Caco-2 (cell line): ENCODE measurements at regions of chr2 and their contacts with region 1.

Region 1: DNA sequence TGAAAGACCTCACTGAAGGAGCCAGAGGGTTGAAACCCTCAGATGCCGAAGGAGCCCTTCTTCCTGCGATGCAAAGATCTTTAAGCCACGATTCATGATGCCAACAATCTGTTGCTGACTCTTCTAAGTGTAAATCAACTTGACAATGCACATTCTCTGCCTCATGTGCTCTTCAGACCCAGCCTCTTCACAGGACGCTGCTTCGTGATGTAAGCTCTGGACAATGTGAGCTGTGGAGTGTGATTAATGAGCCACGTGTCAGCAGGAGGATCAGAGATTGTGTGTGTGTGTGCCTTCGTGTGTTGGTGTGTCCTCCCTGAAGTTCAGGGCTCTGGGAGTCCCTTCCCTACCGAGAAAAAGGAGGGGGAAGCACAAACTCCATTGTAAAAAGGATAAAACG is 26.5 kb upstream of the TWIST2 start:
- DNase-seq: no peak
- H3K4me3 ChIP-seq: no peak overlapping the region
- H3K4me3 Mint-ChIP-seq: no peak overlapping the region
- H3K27ac Mint-ChIP-seq: no peak overlapping the region
- H3K4me1 ChIP-seq: peaks cover 6% of the 10 kb centered on the region; the same call in 1 of the 2 replicates
- H3K4me1 Mint-ChIP-seq: peaks cover 10% of the 10 kb centered on the region
- H3K27me3 ChIP-seq: no peaks in the 10 kb centered on the region
- H3K27me3 Mint-ChIP-seq: no peaks in the 10 kb centered on the region
- CTCF ChIP-seq: no peak

Region 2: DNA sequence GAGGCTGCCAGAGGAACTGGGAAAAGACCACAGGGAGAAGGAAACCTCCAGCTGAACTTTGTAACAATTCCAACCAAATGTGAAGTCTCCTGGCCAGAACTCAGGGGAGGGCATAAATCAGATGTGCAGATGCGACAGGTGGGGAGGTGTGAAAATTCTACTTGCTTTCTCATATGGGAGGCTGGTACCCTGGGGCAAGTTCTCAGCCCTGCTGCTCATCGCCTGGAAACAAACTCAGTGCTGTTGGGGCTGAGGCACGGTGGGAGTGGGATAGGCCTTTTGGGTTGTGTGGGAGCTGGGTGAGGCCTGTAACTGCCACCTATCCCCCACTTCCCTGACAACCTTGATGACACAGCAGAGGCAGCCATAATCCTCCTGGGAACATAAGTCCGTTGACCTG is 215.1 kb before region 1 on chr2:
- CTCF ChIA-PET with region 1: no interaction called
- POLR2A ChIA-PET with region 1: no interaction called
- intact Hi-C with region 1: no loop called
- DNase-seq: no peak
- H3K4me3 ChIP-seq: no peak overlapping the region
- H3K4me3 Mint-ChIP-seq: no peak overlapping the region
- H3K27ac Mint-ChIP-seq: no peak overlapping the region
- H3K4me1 ChIP-seq: no peaks in the 10 kb centered on the region
- H3K4me1 Mint-ChIP-seq: no peaks in the 10 kb centered on the region
- H3K27me3 ChIP-seq: no peaks in the 10 kb centered on the region
- H3K27me3 Mint-ChIP-seq: peaks cover 20% of the 10 kb centered on the region
- CTCF ChIP-seq: no peak

Region 3: GRCh38 chr2:238811293-238811692 is 10.1 kb before region 1 on chr2:
- CTCF ChIA-PET with region 1: no interaction called
- POLR2A ChIA-PET with region 1: no interaction called
- intact Hi-C with region 1: no loop called
- DNase-seq: no peak
- H3K4me3 ChIP-seq: no peak overlapping the region
- H3K4me3 Mint-ChIP-seq: no peak overlapping the region
- H3K27ac Mint-ChIP-seq: no peak overlapping the region
- H3K4me1 ChIP-seq: no peaks in the 10 kb centered on the region
- H3K4me1 Mint-ChIP-seq: no peaks in the 10 kb centered on the region
- H3K27me3 ChIP-seq: no peaks in the 10 kb centered on the region
- H3K27me3 Mint-ChIP-seq: no peaks in the 10 kb centered on the region
- CTCF ChIP-seq: no peak

Region 4: GRCh38 chr2:238864207-238865014 is 43.0 kb after region 1 on chr2:
- CTCF ChIA-PET with region 1: no interaction called
- POLR2A ChIA-PET with region 1: no interaction called
- intact Hi-C with region 1: loop called (anchors 1 kb)
- DNase-seq: peak; percentile 86 to 94
- H3K4me3 ChIP-seq: peak overlapping the region; percentile 25
- H3K4me3 Mint-ChIP-seq: peak overlapping the region; percentile 59
- H3K27ac Mint-ChIP-seq: peak overlapping the region; percentile 91
- H3K4me1 ChIP-seq: peaks cover 22% of the 10 kb centered on the region
- H3K4me1 Mint-ChIP-seq: peaks cover 10% of the 10 kb centered on the region
- H3K27me3 ChIP-seq: no peaks in the 10 kb centered on the region
- H3K27me3 Mint-ChIP-seq: no peaks in the 10 kb centered on the region
- CTCF ChIP-seq: no peak